Gastrocnemius medialis (tissue), 4 donors: ENCODE measurements at regions of chr3 and their contacts with region 1.

Region 1: DNA sequence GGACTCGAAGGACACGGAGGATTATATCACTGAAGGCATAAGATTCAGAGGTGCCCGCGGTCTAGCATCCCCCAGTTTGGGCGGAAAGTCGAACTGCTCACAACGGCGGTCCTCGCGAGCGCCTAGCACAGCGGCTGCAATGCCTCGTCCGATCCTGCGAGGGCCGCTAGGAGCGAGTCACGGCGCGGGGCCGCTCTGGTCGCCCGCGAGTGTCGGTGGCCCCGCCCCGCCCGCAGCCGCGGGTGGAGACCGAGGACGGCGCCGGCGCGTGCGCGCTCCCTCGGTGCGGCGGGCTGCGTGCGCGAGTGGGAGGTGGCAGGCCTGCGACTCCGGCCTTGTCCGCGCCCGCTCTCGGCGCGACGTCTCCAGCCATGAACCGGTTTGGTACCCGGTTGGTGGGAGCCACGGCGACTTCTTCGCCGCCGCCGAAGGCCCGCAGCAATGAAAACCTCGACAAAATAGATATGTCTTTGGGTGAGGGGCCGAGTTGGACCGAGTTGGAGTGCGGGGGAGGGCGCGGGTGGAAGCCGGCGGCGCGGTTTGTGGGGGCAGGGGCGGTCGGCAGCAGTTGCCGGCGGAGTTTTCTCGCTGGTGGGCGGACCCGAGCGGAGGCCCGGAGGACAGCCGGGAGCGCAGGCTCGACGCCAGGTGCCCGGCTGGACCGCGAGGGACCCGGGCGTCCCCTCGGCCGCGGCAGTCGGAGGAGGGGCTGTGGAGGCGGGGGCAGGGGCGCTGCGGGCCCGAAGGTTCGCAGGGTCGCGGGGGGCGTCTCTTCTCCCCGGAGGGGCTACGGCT is at the start of gene FYTTD1:
- DNase-seq: peak; percentile 77 to 90
- ATAC-seq: peak; percentile 47 to 64
- H3K4me3 ChIP-seq: peak within 1 kb of the TSS; percentile 78 to 93 (median 85)
- H3K27ac ChIP-seq: peak within 1 kb of the TSS; percentile 93 to 100 (median 100)
- H3K4me1 ChIP-seq: peaks cover 53 to 70% of the 10 kb centered on the region in 2 donors
- H3K27me3 ChIP-seq: no peaks in the 10 kb centered on the region
- CTCF ChIP-seq: peak; percentile 51 to 62 (median 56)
- POLR2A ChIP-seq: peak; percentile 95 to 97
- total RNA-seq, gene FYTTD1: 77.7 to 184 (median 111) TPM

Region 2: DNA sequence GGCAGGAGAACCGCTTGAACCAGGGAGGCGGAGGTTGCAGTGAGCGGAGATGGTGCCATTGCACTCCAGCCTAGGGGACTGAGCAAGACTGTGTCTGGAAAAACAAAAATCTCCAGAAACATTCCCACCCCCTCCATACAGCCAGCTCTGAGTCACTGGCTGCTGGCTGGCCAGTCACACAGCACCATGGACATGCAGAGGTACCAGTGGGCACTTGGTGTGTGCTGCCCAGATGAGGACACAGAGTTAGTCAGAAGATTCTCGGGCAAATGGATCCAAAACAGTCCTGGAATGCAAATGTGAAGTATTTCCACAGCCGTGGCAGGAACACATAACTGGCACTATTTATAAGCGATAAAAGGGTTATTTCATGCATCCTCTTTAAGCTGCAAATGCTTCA is 238.7 kb before region 1 on chr3:
- in situ Hi-C with region 1: no loop called
- intact Hi-C with region 1: no loop called
- DNase-seq: no peak
- ATAC-seq: no peak
- H3K4me3 ChIP-seq: no peak overlapping the region
- H3K27ac ChIP-seq: no peak overlapping the region
- H3K4me1 ChIP-seq: peaks cover 0 to 1% of the 10 kb centered on the region in 2 donors
- H3K27me3 ChIP-seq: peaks cover 0 to 9% (median 0%) of the 10 kb centered on the region in 3 donors
- CTCF ChIP-seq: no peak
- POLR2A ChIP-seq: no peak

Region 3: GRCh38 chr3:197541756-197542539 is 207.8 kb before region 1 on chr3:
- in situ Hi-C with region 1: no loop called
- intact Hi-C with region 1: no loop called
- DNase-seq: peak; percentile 51 to 75
- ATAC-seq: peak; percentile 85 to 87
- H3K4me3 ChIP-seq: no peak overlapping the region
- H3K27ac ChIP-seq: no peak overlapping the region
- H3K4me1 ChIP-seq: peaks cover 0 to 7% of the 10 kb centered on the region in 2 donors
- H3K27me3 ChIP-seq: no peaks in the 10 kb centered on the region
- CTCF ChIP-seq: no peak
- POLR2A ChIP-seq: no peak

Region 4: DNA sequence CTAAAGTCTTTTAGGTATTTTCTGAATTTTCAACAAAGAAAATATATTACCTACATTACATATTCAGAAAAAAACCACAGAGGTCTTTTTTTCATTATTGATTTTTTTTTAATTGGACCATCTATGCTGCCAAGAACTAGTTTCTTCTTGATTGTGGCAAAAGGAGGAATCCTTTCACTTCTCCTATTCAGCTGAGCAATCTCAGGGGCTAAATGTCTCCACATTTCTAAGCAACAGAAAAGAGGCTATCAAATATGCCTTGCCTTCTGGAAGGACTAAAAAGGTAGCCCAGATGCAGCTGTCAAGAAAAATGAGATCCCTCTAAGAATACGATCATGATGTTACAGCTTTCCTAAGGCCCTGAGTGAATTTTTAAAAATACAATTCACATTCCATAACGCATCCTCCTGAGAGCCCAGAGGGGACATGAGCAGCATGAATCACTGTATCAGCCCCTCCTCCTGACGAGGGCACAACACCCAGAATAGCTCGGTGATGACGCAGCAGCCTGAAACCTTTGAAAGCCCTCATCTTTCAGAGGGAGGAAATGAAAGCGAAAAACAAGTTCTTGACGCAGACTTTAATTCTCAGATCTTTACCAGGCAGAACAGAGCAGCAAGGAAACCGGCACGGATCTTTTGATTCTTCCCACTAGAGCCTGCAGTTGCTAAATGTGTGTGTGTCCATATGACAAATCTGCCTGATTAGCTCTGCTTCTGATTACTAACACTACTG is 37.7 kb before region 1 on chr3:
- in situ Hi-C with region 1: no loop called
- intact Hi-C with region 1: loop called (anchors 1 kb)
- DNase-seq: peak; percentile 83 to 92
- ATAC-seq: peak; percentile 82 to 89
- H3K4me3 ChIP-seq: peak overlapping the region; percentile 25 to 54 (median 46)
- H3K27ac ChIP-seq: peak overlapping the region; percentile 89 to 97 (median 90)
- H3K4me1 ChIP-seq: peaks cover 22 to 24% of the 10 kb centered on the region in 2 donors
- H3K27me3 ChIP-seq: no peaks in the 10 kb centered on the region
- CTCF ChIP-seq: no peak
- POLR2A ChIP-seq: peak; percentile 39 to 54

Region 5: DNA sequence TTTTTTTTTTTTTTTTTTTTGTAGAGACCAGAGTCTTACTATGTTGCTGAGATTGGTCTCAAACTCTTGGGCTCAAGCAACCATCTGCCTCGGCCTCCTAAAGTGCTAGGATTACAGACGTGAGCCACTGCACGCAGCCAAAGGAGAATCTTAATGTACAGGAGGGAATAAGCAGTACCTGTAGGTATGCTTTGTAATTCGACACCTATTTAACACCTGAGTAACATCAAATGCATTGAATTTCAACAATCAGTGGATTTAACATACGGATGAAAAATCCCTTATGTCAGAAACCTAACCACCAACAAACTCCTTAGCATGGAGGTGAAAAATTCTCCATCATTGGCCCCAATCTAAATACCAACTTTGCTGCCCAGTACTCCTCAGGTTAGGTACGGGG is 24.3 kb before region 1 on chr3:
- in situ Hi-C with region 1: no loop called
- intact Hi-C with region 1: no loop called
- DNase-seq: no peak
- ATAC-seq: no peak
- H3K4me3 ChIP-seq: no peak overlapping the region
- H3K27ac ChIP-seq: no peak overlapping the region
- H3K4me1 ChIP-seq: no peaks in the 10 kb centered on the region
- H3K27me3 ChIP-seq: no peaks in the 10 kb centered on the region
- CTCF ChIP-seq: no peak
- POLR2A ChIP-seq: no peak

Region 6: GRCh38 chr3:197736491-197737318 is 13.1 kb before region 1 on chr3 and contains the start of gene RUBCN:
- in situ Hi-C with region 1: no loop called
- intact Hi-C with region 1: loop called (anchors 1 kb)
- DNase-seq: peak; percentile 95 to 96
- ATAC-seq: peak; percentile 88 to 89
- H3K4me3 ChIP-seq: peak within 1 kb of the TSS; percentile 77 to 98 (median 92)
- H3K27ac ChIP-seq: peak within 1 kb of the TSS; percentile 86 to 95 (median 92)
- H3K4me1 ChIP-seq: peaks cover 17 to 21% of the 10 kb centered on the region in 2 donors
- H3K27me3 ChIP-seq: no peaks in the 10 kb centered on the region
- CTCF ChIP-seq: peak in 2 of 5 experiments; percentile 10 to 20
- POLR2A ChIP-seq: peak; percentile 93 to 97
- total RNA-seq, gene RUBCN: 15.6 to 33.1 (median 21.6) TPM

Region 7: GRCh38 chr3:197791113-197791891 is 41.5 kb after region 1 on chr3 and contains the start of gene LRCH3:
- in situ Hi-C with region 1: no loop called
- intact Hi-C with region 1: loop called (anchors 5 kb)
- DNase-seq: peak; percentile 50 to 59
- ATAC-seq: peak; percentile 82 to 88
- H3K4me3 ChIP-seq: peak within 1 kb of the TSS; percentile 79 to 98 (median 87)
- H3K27ac ChIP-seq: peak within 1 kb of the TSS; percentile 89 to 99 (median 94)
- H3K4me1 ChIP-seq: peaks cover 34 to 39% of the 10 kb centered on the region in 2 donors
- H3K27me3 ChIP-seq: no peaks in the 10 kb centered on the region
- CTCF ChIP-seq: no peak
- POLR2A ChIP-seq: peak; percentile 42 to 74
- total RNA-seq, gene LRCH3: 18.0 to 126 (median 26.7) TPM

Region 8: GRCh38 chr3:197912770-197913476 is 163.1 kb after region 1 on chr3:
- in situ Hi-C with region 1: no loop called
- intact Hi-C with region 1: no loop called
- DNase-seq: no peak
- ATAC-seq: no peak
- H3K4me3 ChIP-seq: no peak overlapping the region
- H3K27ac ChIP-seq: no peak overlapping the region
- H3K4me1 ChIP-seq: no peaks in the 10 kb centered on the region
- H3K27me3 ChIP-seq: no peaks in the 10 kb centered on the region
- CTCF ChIP-seq: no peak
- POLR2A ChIP-seq: no peak

Region 9: DNA sequence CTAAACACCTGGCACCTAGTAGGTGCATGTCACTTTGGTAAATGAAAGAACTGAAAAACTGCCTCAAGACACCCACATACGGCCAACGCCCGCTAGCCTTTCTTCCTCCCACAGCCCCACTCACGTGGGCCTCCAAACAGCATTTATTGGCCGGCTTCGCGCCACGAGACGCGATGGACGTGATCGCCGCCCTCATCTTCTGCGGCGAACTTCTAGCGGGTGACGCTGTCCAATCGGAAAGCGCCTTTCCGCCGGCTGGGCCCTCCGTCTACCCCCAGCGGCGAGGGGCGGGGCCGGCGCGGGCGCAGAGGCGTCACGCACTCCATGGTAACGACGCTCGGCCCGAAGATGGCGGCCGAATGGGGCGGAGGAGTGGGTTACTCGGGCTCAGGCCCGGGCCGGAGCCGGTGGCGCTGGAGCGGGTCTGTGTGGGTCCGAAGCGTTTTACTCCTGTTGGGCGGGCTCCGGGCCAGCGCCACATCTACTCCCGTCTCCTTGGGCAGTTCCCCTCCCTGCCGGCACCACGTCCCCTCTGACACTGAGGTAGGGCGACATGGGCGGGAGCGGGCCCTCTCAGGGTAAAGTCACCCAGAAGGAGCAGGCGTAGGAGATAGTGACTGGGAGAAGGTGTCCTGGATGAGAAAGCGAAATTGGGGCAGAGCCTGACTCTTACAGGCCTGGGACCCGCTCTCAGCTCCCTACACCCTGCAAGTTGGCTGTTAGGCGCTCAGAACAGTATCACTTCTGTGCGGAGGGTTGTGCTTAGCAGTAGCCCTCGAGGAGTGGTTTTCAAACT is 210.3 kb after region 1 on chr3 and contains the start of gene LMLN:
- in situ Hi-C with region 1: no loop called
- intact Hi-C with region 1: loop called (anchors 10 kb)
- DNase-seq: peak; percentile 94
- ATAC-seq: peak; percentile 97
- H3K4me3 ChIP-seq: peak within 1 kb of the TSS; percentile 75 to 89 (median 80)
- H3K27ac ChIP-seq: peak within 1 kb of the TSS; percentile 74 to 86 (median 80)
- H3K4me1 ChIP-seq: peaks cover 15 to 19% of the 10 kb centered on the region in 2 donors
- H3K27me3 ChIP-seq: no peaks in the 10 kb centered on the region
- CTCF ChIP-seq: peak in 1 of 5 experiments; percentile 27
- POLR2A ChIP-seq: peak; percentile 57 to 76
- total RNA-seq, gene LMLN: 2.7 to 8.8 (median 4.6) TPM